Heart right ventricle (tissue), 16 donors: ENCODE measurements at regions of chr4 and their contacts with region 1.

Region 1: GRCh38 chr4:61985426-61985825 is 785.3 kb downstream of the ADGRL3 start:
- DNase-seq: no peak
- ATAC-seq: no peak
- H3K4me3 ChIP-seq: no peak overlapping the region
- H3K27ac ChIP-seq: no peak overlapping the region
- H3K4me1 ChIP-seq: no peaks in the 10 kb centered on the region
- H3K27me3 ChIP-seq: no peaks in the 10 kb centered on the region
- CTCF ChIP-seq: no peak

Region 2: DNA sequence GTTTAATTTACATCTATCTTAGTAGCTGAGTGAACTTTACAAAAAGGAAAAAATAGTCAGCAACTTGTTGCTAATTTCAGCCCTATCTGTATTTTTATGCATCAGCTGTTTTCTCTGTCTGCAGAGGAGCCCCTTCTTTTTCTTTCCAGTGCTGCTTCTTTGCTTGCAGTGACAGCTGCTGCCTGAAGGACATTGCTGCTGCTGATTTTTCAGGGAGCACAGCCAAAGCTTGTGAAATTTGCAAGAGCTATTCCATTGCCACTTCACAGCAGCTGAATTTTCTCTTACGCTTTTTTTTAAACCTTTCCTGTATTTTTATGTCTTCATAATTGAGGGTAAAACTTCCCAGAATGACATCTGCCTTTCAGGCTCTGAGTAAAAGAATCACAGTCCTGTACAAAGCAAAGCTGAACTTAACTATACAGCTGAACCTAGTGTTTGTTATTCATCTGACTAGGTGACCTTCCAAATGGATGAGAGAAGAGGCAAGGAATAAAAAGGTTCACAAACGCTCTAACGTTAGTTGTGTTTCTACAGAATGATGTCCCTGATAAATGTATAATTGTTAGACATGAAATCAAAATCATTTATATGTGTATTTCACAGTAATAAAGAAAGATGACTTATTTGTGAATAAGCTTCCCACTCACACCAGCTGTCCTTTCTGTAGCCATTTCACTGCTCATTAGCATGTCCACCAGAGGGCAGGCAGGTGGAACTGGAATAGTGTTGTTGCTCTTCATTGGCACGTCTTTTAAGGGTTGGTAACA is 243.9 kb before region 1 on chr4:
- intact Hi-C with region 1: loop called in 1 of 10 experiments (anchors 5 kb)
- DNase-seq: peak in 1 of 2 donors; percentile 25
- ATAC-seq: peak; percentile 72 to 95 (median 91)
- H3K4me3 ChIP-seq: peak overlapping the region in 2 of 10 donors; percentile 11 to 28
- H3K27ac ChIP-seq: peak overlapping the region in 5 of 10 donors; percentile 19 to 61 (median 45)
- H3K4me1 ChIP-seq: peaks cover 0 to 17% (median 0%) of the 10 kb centered on the region in 9 donors
- H3K27me3 ChIP-seq: no peaks in the 10 kb centered on the region
- CTCF ChIP-seq: peak; percentile 16 to 48 (median 42)

Region 3: GRCh38 chr4:62037571-62037970 is 52.1 kb after region 1 on chr4:
- intact Hi-C with region 1: no loop called
- DNase-seq: no peak
- ATAC-seq: no peak
- H3K4me3 ChIP-seq: no peak overlapping the region
- H3K27ac ChIP-seq: no peak overlapping the region
- H3K4me1 ChIP-seq: no peaks in the 10 kb centered on the region
- H3K27me3 ChIP-seq: no peaks in the 10 kb centered on the region
- CTCF ChIP-seq: no peak